CD4-positive, alpha-beta memory T cell (primary cell): ENCODE measurements at regions of chr10 and their contacts with region 1.

Region 1: GRCh38 chr10:74826142-74827044 is at the start of gene KAT6B:
- DNase-seq: peak; percentile 100
- H3K4me3 ChIP-seq: peak within 1 kb of the TSS; percentile 63 to 90
- H3K4me3 Mint-ChIP-seq: peak within 1 kb of the TSS; percentile 87 to 96 (median 94)
- H3K27ac ChIP-seq: peak within 1 kb of the TSS; percentile 93
- H3K27ac Mint-ChIP-seq: peak within 1 kb of the TSS; percentile 91 to 99 (median 98)
- H3K4me1 ChIP-seq: peaks cover 53% of the 10 kb centered on the region
- H3K4me1 Mint-ChIP-seq: peaks cover 60 to 80% (median 63%) of the 10 kb centered on the region in 4 donors
- H3K27me3 ChIP-seq: no peaks in the 10 kb centered on the region
- H3K27me3 Mint-ChIP-seq: no peaks in the 10 kb centered on the region
- total RNA-seq, gene KAT6B: 63.6 to 63.9 TPM

Region 2: GRCh38 chr10:73246783-73247508 is 1579.4 kb before region 1 on chr10 and contains the start of gene DNAJC9:
- CTCF ChIA-PET with region 1: no interaction called
- POLR2A ChIA-PET with region 1: no interaction called
- intact Hi-C with region 1: loop called (anchors 5 kb)
- DNase-seq: peak; percentile 95 to 98 (median 96)
- H3K4me3 ChIP-seq: peak within 1 kb of the TSS; percentile 53 to 87
- H3K4me3 Mint-ChIP-seq: peak within 1 kb of the TSS; percentile 96 to 99 (median 97)
- H3K27ac ChIP-seq: peak within 1 kb of the TSS; percentile 82
- H3K27ac Mint-ChIP-seq: peak within 1 kb of the TSS; percentile 94 to 99 (median 98)
- H3K4me1 ChIP-seq: peaks cover 50% of the 10 kb centered on the region
- H3K4me1 Mint-ChIP-seq: peaks cover 35 to 74% (median 56%) of the 10 kb centered on the region in 4 donors
- H3K27me3 ChIP-seq: no peaks in the 10 kb centered on the region
- H3K27me3 Mint-ChIP-seq: no peaks in the 10 kb centered on the region
- total RNA-seq, gene DNAJC9: 31.6 to 31.7 TPM

Region 3: GRCh38 chr10:73997787-73998622 is 828.4 kb before region 1 on chr10 and contains the start of gene VCL:
- CTCF ChIA-PET with region 1: no interaction called
- POLR2A ChIA-PET with region 1: no interaction called
- intact Hi-C with region 1: loop called (anchors 5 kb)
- DNase-seq: peak; percentile 95 to 96 (median 95)
- H3K4me3 ChIP-seq: peak within 1 kb of the TSS; percentile 76 to 94
- H3K4me3 Mint-ChIP-seq: peak within 1 kb of the TSS; percentile 99 to 100 (median 100)
- H3K27ac ChIP-seq: peak within 1 kb of the TSS; percentile 87
- H3K27ac Mint-ChIP-seq: peak within 1 kb of the TSS; percentile 81 to 100 (median 99)
- H3K4me1 ChIP-seq: peaks cover 57% of the 10 kb centered on the region
- H3K4me1 Mint-ChIP-seq: peaks cover 33 to 69% (median 51%) of the 10 kb centered on the region in 4 donors
- H3K27me3 ChIP-seq: no peaks in the 10 kb centered on the region
- H3K27me3 Mint-ChIP-seq: no peaks in the 10 kb centered on the region
- total RNA-seq, gene VCL: 29.6 TPM

Region 4: DNA sequence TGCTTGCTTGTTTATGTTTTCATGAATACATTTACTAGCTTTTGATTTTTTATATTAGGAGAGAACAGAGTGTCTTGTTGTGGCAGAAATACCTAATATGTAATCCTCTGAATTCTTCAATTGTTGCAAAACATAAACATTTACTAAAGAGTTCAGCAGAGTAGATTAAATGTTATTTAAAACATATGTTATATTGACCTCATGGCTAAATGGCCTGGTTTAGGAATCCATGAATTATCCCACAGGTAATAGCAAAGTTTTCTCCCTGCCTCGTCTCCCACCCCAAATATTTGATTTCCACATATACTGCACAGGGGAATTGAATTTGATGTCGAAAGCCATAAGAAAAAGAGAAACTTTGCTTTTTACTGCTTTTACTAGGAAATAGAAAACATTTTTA is 563.5 kb before region 1 on chr10:
- CTCF ChIA-PET with region 1: no interaction called
- POLR2A ChIA-PET with region 1: no interaction called
- intact Hi-C with region 1: loop called (anchors 1 kb)
- DNase-seq: no peak
- H3K4me3 ChIP-seq: no peak overlapping the region
- H3K4me3 Mint-ChIP-seq: no peak overlapping the region
- H3K27ac ChIP-seq: no peak overlapping the region
- H3K27ac Mint-ChIP-seq: peak overlapping the region in 2 of 7 donors; percentile 19 to 57
- H3K4me1 ChIP-seq: no peaks in the 10 kb centered on the region
- H3K4me1 Mint-ChIP-seq: peaks cover 0 to 12% (median 7%) of the 10 kb centered on the region in 4 donors
- H3K27me3 ChIP-seq: no peaks in the 10 kb centered on the region
- H3K27me3 Mint-ChIP-seq: no peaks in the 10 kb centered on the region

Region 5: GRCh38 chr10:74738985-74739567 is 87.3 kb before region 1 on chr10:
- CTCF ChIA-PET with region 1: interaction called, 5 read pairs
- POLR2A ChIA-PET with region 1: interaction called, 7 read pairs
- intact Hi-C with region 1: loop called (anchors 1 kb)
- DNase-seq: peak in 4 of 5 donors; percentile 23 to 36 (median 32)
- H3K4me3 ChIP-seq: no peak overlapping the region
- H3K4me3 Mint-ChIP-seq: peak overlapping the region in 6 of 8 donors; percentile 28 to 65 (median 49)
- H3K27ac ChIP-seq: no peak overlapping the region
- H3K27ac Mint-ChIP-seq: peak overlapping the region; percentile 63 to 89 (median 81)
- H3K4me1 ChIP-seq: peaks cover 14% of the 10 kb centered on the region
- H3K4me1 Mint-ChIP-seq: peaks cover 11 to 20% (median 17%) of the 10 kb centered on the region in 4 donors
- H3K27me3 ChIP-seq: no peaks in the 10 kb centered on the region
- H3K27me3 Mint-ChIP-seq: no peaks in the 10 kb centered on the region

Region 6: DNA sequence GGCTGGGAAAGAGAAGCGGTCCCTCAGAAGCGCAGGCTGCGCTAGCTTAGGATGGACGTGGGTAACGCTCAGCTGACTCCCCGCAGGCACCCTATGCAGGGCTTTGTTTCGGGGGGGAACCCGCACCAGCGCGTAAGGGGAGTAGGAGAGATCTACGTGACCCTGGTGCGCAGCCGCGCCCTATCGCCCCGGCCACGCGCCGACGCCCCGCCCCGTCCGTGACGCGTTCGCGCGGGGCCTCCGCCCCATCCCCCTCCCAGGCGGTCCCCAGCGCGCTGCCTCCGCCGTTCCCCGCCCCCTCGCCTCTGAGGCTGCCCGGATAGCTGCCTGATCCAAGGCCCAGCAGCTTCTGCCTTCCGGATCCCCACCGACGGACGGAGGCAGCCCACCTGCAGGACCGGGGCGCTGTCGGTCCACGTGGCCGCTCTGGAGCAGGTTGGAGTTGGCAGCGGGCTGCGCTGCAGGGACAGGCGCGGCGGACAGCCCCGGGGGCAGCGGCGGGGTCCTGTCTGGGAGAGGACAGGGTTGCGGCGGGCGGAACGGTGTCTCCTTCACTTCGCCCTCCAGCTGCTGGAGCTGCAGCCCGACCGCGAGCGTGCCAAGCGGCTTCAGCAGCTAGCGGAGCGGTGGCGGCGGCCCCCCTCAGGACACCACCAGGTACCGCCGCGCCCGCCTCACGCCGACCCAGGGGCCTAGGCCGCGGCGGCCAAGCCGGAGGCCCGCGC is 384.1 kb after region 1 on chr10 and contains the start of gene VDAC2:
- CTCF ChIA-PET with region 1: no interaction called
- POLR2A ChIA-PET with region 1: interaction called, 7 read pairs
- intact Hi-C with region 1: loop called (anchors 1 kb)
- DNase-seq: peak; percentile 94 to 100 (median 98)
- H3K4me3 ChIP-seq: peak within 1 kb of the TSS; percentile 96 to 100
- H3K4me3 Mint-ChIP-seq: peak within 1 kb of the TSS; percentile 98 to 100 (median 100)
- H3K27ac ChIP-seq: peak within 1 kb of the TSS; percentile 97
- H3K27ac Mint-ChIP-seq: peak within 1 kb of the TSS; percentile 96 to 100 (median 100)
- H3K4me1 ChIP-seq: peaks cover 31% of the 10 kb centered on the region
- H3K4me1 Mint-ChIP-seq: peaks cover 18 to 35% (median 26%) of the 10 kb centered on the region in 4 donors
- H3K27me3 ChIP-seq: no peaks in the 10 kb centered on the region
- H3K27me3 Mint-ChIP-seq: no peaks in the 10 kb centered on the region
- total RNA-seq, gene VDAC2: 76.9 to 79.0 TPM